ENCODE measurements at regions of chr5 and their contacts with region 1.

Region 1: DNA sequence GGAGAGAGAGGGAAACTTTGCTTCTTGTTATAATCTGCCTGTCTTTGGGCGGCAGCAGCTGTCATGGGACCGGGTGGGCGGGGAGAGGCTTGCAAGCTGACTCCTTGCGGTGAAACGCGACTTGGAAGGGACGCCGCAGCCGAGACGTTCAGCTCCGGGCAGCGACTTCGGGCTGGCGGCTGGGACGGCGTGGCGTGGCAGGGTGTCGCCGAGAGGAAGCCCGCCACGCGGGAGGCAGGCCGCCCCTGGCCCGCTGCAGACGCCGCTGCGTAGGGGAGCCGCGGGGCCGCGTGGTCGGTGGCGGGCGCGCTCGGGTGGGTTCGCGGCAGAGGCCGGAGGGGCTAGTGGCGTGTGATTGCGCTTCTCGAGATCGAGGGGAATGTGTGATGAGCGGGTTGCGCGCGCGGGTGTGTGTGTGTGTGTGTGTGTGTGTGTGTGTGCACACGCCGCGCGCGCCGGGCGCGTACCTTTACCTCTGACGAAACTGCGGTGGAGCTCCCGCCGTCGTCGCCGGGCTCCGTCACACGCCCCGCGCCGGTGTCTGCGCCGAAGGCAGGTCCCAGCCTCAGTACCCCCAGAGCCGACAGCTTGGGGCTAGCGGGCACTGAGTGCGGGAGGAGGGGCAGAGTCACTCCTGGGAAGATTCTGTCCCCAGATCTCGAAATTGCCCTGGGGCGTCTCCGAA is 1.7 kb downstream of the PPARGC1B start:
- DNase-seq: peak; percentile 87
- ATAC-seq: peak; percentile 60
- H3K4me3 ChIP-seq: peak overlapping the region; percentile 13 to 86 (median 80)
- H3K4me3 Mint-ChIP-seq: peak overlapping the region; percentile 90
- H3K27ac ChIP-seq: peak overlapping the region in 1 of 2 donors; percentile 64
- H3K27ac Mint-ChIP-seq: peak overlapping the region; percentile 82
- H3K4me1 ChIP-seq: peaks cover 5 to 8% of the 10 kb centered on the region in 2 donors
- H3K4me1 Mint-ChIP-seq: peaks cover 6% of the 10 kb centered on the region
- H3K27me3 ChIP-seq: no peaks in the 10 kb centered on the region
- H3K27me3 Mint-ChIP-seq: no peaks in the 10 kb centered on the region
- CTCF ChIP-seq: no peak

Region 2: GRCh38 chr5:149551200-149552037 is 180.4 kb before region 1 on chr5 and contains the start of gene CSNK1A1:
- CTCF ChIA-PET with region 1: no interaction called
- POLR2A ChIA-PET with region 1: no interaction called
- intact Hi-C with region 1: loop called (anchors 5 kb)
- DNase-seq: peak; percentile 99
- ATAC-seq: peak; percentile 84
- H3K4me3 ChIP-seq: peak within 1 kb of the TSS; percentile 93 to 99 (median 97)
- H3K4me3 Mint-ChIP-seq: peak within 1 kb of the TSS; percentile 97
- H3K27ac ChIP-seq: peak within 1 kb of the TSS; percentile 87 to 97
- H3K27ac Mint-ChIP-seq: peak within 1 kb of the TSS; percentile 99
- H3K4me1 ChIP-seq: peaks cover 20 to 27% of the 10 kb centered on the region in 2 donors
- H3K4me1 Mint-ChIP-seq: peaks cover 35% of the 10 kb centered on the region
- H3K27me3 ChIP-seq: no peaks in the 10 kb centered on the region
- H3K27me3 Mint-ChIP-seq: no peaks in the 10 kb centered on the region
- CTCF ChIP-seq: peak; percentile 74
- total RNA-seq, gene CSNK1A1: 168 TPM in 2 replicates

Region 3: GRCh38 chr5:149596713-149597112 is 135.1 kb before region 1 on chr5:
- CTCF ChIA-PET with region 1: no interaction called
- POLR2A ChIA-PET with region 1: no interaction called
- intact Hi-C with region 1: no loop called
- DNase-seq: no peak
- ATAC-seq: no peak
- H3K4me3 ChIP-seq: no peak overlapping the region
- H3K4me3 Mint-ChIP-seq: peak overlapping the region; percentile 3
- H3K27ac ChIP-seq: no peak overlapping the region
- H3K27ac Mint-ChIP-seq: peak overlapping the region; percentile 24
- H3K4me1 ChIP-seq: peaks cover 6 to 21% of the 10 kb centered on the region in 2 donors
- H3K4me1 Mint-ChIP-seq: peaks cover 17% of the 10 kb centered on the region
- H3K27me3 ChIP-seq: no peaks in the 10 kb centered on the region
- H3K27me3 Mint-ChIP-seq: no peaks in the 10 kb centered on the region
- CTCF ChIP-seq: no peak

Region 4: DNA sequence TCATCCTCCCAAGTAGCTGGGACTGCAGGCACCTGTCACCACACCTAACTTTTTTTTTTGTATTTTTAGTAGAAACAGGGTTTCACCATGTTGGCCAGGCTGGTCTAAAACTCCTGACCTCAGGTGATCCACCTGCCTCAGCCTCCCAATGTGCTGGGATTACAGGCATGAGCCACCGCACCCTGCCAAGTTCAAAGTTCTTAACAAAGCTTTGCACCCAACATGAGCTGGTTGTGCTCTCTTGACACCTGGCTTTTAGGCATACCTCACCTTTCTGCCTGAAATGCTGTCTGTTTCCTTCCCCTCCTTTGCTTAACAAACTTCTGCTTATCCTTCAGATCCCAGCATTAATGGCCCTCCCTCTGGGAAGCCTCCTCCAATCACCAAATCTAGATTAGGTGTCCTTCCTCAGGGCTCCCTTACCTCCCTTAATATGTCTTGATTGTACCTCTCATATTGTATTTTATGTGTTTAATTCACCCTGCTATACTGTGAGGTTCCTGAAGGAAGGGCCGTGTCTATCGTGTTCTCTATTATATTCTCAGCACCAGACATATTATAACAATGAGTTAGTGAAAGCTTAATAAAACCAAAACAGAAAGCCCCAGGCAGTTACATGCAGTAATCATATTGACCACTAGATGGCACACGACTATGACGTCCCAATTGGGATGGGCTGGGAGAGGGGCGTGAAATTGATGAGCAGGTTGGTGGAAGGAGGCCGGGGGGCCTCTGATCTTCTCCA is 64.5 kb before region 1 on chr5:
- CTCF ChIA-PET with region 1: interaction called, 7 read pairs
- POLR2A ChIA-PET with region 1: interaction called, 3 read pairs
- intact Hi-C with region 1: loop called (anchors 5 kb)
- DNase-seq: peak; percentile 72
- ATAC-seq: peak; percentile 45
- H3K4me3 ChIP-seq: no peak overlapping the region
- H3K4me3 Mint-ChIP-seq: no peak overlapping the region
- H3K27ac ChIP-seq: no peak overlapping the region
- H3K27ac Mint-ChIP-seq: no peak overlapping the region
- H3K4me1 ChIP-seq: peaks cover 0 to 4% of the 10 kb centered on the region in 2 donors
- H3K4me1 Mint-ChIP-seq: peaks cover 3% of the 10 kb centered on the region
- H3K27me3 ChIP-seq: no peaks in the 10 kb centered on the region
- H3K27me3 Mint-ChIP-seq: no peaks in the 10 kb centered on the region
- CTCF ChIP-seq: peak; percentile 87

Region 5: DNA sequence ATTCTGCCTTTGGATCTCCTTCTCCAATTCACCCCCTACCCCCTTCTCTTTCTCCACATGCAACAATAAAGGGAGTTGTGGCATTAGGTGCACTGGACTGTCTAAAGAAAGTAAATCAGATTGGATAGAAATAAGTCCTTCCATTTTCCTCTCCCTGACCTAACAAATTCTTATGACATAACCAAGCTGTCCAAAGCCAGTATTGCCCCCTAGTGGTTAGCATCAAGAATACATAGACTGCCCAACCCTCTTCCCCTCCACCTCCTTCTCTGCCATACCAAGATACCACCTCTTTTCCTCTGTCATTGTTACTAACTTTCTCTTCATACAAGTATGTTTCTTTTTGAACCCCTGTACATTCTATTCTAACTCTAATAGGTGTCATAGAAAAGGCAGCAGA is 44.0 kb after region 1 on chr5:
- CTCF ChIA-PET with region 1: interaction called, 11 read pairs
- POLR2A ChIA-PET with region 1: interaction called, 3 read pairs
- intact Hi-C with region 1: loop called (anchors 1 kb)
- DNase-seq: no peak
- ATAC-seq: no peak
- H3K4me3 ChIP-seq: no peak overlapping the region
- H3K4me3 Mint-ChIP-seq: no peak overlapping the region
- H3K27ac ChIP-seq: no peak overlapping the region
- H3K27ac Mint-ChIP-seq: no peak overlapping the region
- H3K4me1 ChIP-seq: peaks cover 44 to 49% of the 10 kb centered on the region in 2 donors
- H3K4me1 Mint-ChIP-seq: peaks cover 57% of the 10 kb centered on the region
- H3K27me3 ChIP-seq: no peaks in the 10 kb centered on the region
- H3K27me3 Mint-ChIP-seq: no peaks in the 10 kb centered on the region
- CTCF ChIP-seq: peak; percentile 56

Region 6: DNA sequence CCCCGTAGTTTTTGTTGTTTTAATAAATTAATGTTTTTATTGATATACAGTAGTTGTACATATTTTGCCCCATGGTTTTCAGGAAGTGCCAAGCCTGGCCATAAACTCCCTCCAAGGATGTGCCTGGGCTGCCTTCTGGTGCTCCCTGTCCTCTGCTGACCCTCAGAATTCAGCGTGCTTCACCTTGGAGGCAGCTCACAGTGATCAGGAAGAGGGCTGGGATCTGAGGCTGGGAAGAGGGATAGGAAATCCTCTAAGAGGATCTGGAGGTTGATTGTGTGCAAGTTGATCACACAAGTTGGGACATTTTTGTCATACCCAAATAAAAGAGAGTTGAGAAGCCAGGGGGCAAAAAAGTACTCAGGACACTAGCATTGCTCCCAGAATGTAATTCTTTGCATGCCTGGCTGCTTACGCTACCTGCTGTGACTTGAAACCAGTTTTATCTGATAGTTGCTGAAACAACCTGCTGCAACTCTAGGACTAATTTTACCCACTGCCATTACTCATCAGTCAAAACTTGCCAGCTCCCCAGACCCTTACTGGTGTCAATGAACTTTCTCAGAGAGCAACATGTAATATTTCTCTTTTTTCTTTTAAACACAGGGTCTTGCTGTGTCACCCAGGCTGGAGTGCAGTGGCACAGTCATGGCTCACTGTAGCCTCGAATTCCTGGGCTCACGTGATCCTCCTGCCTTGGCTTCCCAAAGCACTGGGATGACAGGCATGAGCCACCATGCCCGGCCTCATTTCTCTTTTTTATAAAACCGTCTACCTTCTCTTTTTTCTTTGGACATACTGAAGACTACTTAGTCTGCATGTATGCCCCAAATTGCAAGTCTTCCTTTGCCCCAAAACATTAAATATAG is 183.8 kb after region 1 on chr5:
- CTCF ChIA-PET with region 1: no interaction called
- POLR2A ChIA-PET with region 1: no interaction called
- intact Hi-C with region 1: no loop called
- DNase-seq: no peak
- ATAC-seq: no peak
- H3K4me3 ChIP-seq: no peak overlapping the region
- H3K4me3 Mint-ChIP-seq: no peak overlapping the region
- H3K27ac ChIP-seq: no peak overlapping the region
- H3K27ac Mint-ChIP-seq: no peak overlapping the region
- H3K4me1 ChIP-seq: no peaks in the 10 kb centered on the region
- H3K4me1 Mint-ChIP-seq: peaks cover 4% of the 10 kb centered on the region
- H3K27me3 ChIP-seq: peaks cover 0 to 3% (median 0%) of the 10 kb centered on the region in 4 experiments
- H3K27me3 Mint-ChIP-seq: peaks cover 19% of the 10 kb centered on the region
- CTCF ChIP-seq: no peak

Region 7: DNA sequence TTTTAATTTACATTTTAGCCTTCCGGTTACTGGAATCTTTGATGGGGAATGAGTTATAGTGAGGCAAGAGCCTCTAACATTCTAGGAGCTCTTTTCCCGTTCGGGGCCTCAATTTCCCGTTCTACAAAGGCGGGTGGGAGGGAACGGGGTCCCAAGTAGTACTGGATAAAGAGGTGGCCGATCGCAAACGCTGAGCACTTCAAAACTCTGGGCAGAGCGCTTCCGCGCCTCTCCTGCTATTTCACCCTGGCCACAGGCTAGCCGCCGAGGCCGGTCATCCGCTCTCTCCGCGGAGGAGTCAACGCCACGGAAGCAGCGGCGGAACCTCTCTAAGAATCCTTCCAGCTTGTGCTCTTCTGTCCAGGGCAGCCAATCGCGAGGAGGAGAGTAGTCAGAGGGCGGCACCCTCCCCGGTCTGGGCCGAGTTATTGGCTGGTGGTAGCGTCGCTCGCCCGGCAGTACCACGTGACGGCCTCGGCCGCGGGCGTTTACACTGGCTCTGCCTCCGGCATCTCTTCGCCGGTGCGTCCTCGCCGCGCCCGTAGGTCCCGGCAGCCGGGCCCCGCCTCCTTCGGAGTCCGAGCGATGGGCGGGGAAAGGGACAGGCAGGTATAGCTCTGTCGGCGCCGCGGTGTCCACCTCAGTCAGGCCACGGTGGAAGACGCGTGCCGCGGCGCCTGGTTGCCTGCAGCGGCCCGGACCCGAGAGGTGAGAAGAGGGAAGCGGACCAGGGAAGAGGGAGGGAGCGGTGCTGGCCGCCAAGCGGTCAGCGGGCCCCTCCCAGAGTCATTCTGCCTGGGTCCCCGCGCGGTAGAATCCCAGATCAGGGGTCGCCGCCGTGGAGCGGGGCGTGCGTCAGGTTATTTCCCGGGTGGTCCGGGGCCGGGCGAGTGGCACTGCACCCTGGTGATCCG is 228.7 kb after region 1 on chr5 and contains the start of gene SLC26A2:
- CTCF ChIA-PET with region 1: no interaction called
- POLR2A ChIA-PET with region 1: no interaction called
- intact Hi-C with region 1: loop called (anchors 1 kb)
- DNase-seq: peak; percentile 95
- ATAC-seq: peak; percentile 97
- H3K4me3 ChIP-seq: peak within 1 kb of the TSS; percentile 54 to 85 (median 79)
- H3K4me3 Mint-ChIP-seq: peak within 1 kb of the TSS; percentile 93
- H3K27ac ChIP-seq: peak within 1 kb of the TSS; percentile 74 to 81
- H3K27ac Mint-ChIP-seq: peak within 1 kb of the TSS; percentile 96
- H3K4me1 ChIP-seq: peaks cover 20% of the 10 kb centered on the region in 2 donors
- H3K4me1 Mint-ChIP-seq: peaks cover 29% of the 10 kb centered on the region
- H3K27me3 ChIP-seq: no peaks in the 10 kb centered on the region
- H3K27me3 Mint-ChIP-seq: no peaks in the 10 kb centered on the region
- CTCF ChIP-seq: no peak
- total RNA-seq, gene SLC26A2: 13.2 and 13.5 TPM in 2 replicates